GM12878 (cell line): ENCODE measurements at regions of chr6 and their contacts with region 1.

Region 1: GRCh38 chr6:82006027-82006738 is 241.4 kb downstream of the IBTK start:
- DNase-seq: no peak
- ATAC-seq: peak; percentile 95
- H3K4me3 ChIP-seq: no peak overlapping the region
- H3K27ac ChIP-seq: no peak overlapping the region
- H3K4me1 ChIP-seq: no peaks in the 10 kb centered on the region
- H3K27me3 ChIP-seq: no peaks in the 10 kb centered on the region
- CTCF ChIP-seq: peak; percentile 55 to 62 (median 60)
- EP300 ChIP-seq: no peak
- POLR2A ChIP-seq: no peak
- RAD21 ChIP-seq: peak; percentile 80

Region 2: GRCh38 chr6:80605165-80605989 is 1400.8 kb before region 1 on chr6:
- CTCF ChIA-PET with region 1: interaction called, 3 read pairs
- POLR2A ChIA-PET with region 1: no interaction called
- RAD21 ChIA-PET with region 1: no interaction called
- SMC1A ChIA-PET with region 1: interaction called, 3 read pairs
- in situ Hi-C with region 1: loop called (anchors 25 kb)
- intact Hi-C with region 1: no loop called
- DNase-seq: no peak
- ATAC-seq: peak; percentile 74
- H3K4me3 ChIP-seq: no peak overlapping the region
- H3K27ac ChIP-seq: no peak overlapping the region
- H3K4me1 ChIP-seq: no peaks in the 10 kb centered on the region
- H3K27me3 ChIP-seq: no peaks in the 10 kb centered on the region
- CTCF ChIP-seq: peak; percentile 30 to 52 (median 43); a peak in 4 of 6 replicates
- EP300 ChIP-seq: no peak
- POLR2A ChIP-seq: no peak
- RAD21 ChIP-seq: peak; percentile 51

Region 3: DNA sequence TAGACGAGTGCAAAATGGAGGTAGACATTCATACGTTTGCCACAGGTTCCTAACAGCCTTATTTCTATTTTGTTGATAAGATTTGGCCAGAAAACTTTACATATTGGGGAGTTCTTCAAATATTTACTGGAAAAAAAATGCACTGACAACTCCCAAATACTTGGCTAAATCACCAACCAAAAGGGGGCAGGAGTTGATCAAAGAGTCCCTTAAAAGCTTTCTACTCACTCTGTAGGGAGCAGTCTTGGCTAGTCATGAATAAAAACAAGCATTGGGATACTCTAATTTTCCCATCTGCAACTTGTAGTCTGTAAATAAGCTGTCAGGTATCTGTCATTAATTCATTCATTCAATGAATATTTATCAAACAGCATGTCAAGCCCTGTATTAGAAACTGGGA is 272.1 kb before region 1 on chr6:
- CTCF ChIA-PET with region 1: interaction called, 41 read pairs
- POLR2A ChIA-PET with region 1: interaction called, 3 read pairs
- RAD21 ChIA-PET with region 1: interaction called, 7 read pairs
- SMC1A ChIA-PET with region 1: interaction called, 18 read pairs
- in situ Hi-C with region 1: no loop called
- intact Hi-C with region 1: no loop called
- DNase-seq: no peak
- ATAC-seq: no peak
- H3K4me3 ChIP-seq: no peak overlapping the region
- H3K27ac ChIP-seq: no peak overlapping the region
- H3K4me1 ChIP-seq: no peaks in the 10 kb centered on the region
- H3K27me3 ChIP-seq: no peaks in the 10 kb centered on the region
- CTCF ChIP-seq: peak in 1 of 3 experiments; percentile 32; a peak in 1 of 6 replicates
- EP300 ChIP-seq: no peak
- POLR2A ChIP-seq: no peak
- RAD21 ChIP-seq: peak; percentile 36; the same call in 1 of the 2 replicates

Region 4: GRCh38 chr6:81752138-81752920 is 253.9 kb before region 1 on chr6 and contains the start of gene TENT5A:
- CTCF ChIA-PET with region 1: interaction called, 24 read pairs
- POLR2A ChIA-PET with region 1: no interaction called
- RAD21 ChIA-PET with region 1: interaction called, 27 read pairs
- SMC1A ChIA-PET with region 1: interaction called, 25 read pairs
- in situ Hi-C with region 1: no loop called
- intact Hi-C with region 1: loop called (anchors 5 kb)
- DNase-seq: no peak
- ATAC-seq: peak; percentile 93
- H3K4me3 ChIP-seq: peak within 1 kb of the TSS; percentile 61
- H3K27ac ChIP-seq: no peak within 1 kb of the TSS
- H3K4me1 ChIP-seq: no peaks in the 10 kb centered on the region
- H3K27me3 ChIP-seq: peaks cover 0 to 10% of the 10 kb centered on the region in 2 experiments
- CTCF ChIP-seq: no peak
- EP300 ChIP-seq: no peak
- POLR2A ChIP-seq: peak; percentile 58
- RAD21 ChIP-seq: no peak
- polyA plus RNA-seq, gene TENT5A: 0.40 to 0.53 TPM

Region 5: DNA sequence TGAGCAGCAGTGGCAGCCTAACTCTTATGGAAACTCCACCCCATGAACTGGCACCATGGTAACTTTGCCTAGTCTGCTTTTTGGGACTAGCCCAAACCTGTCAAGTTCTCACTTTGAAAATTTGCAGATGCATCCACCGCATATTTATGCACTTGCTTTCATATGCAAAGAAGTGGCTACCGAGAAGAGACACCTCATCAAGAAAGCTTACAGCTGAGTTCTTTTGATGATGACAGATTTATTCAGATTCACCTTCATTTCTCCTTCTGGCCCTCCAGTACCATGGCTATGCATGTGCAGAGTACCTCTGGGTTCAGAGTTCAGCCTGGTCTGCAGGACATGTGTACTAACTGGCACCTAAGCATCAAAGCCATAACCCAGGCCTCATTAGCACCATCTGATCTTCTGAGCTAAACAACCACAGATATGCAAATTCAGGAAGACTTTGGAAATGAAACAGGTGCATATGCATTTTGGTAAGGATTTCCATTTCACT is 99.4 kb before region 1 on chr6:
- CTCF ChIA-PET with region 1: interaction called, 11 read pairs
- POLR2A ChIA-PET with region 1: no interaction called
- RAD21 ChIA-PET with region 1: interaction called, 3 read pairs
- SMC1A ChIA-PET with region 1: interaction called, 15 read pairs
- in situ Hi-C with region 1: no loop called
- intact Hi-C with region 1: no loop called
- DNase-seq: peak; percentile 44
- ATAC-seq: peak; percentile 54
- H3K4me3 ChIP-seq: no peak overlapping the region
- H3K27ac ChIP-seq: no peak overlapping the region
- H3K4me1 ChIP-seq: no peaks in the 10 kb centered on the region
- H3K27me3 ChIP-seq: no peaks in the 10 kb centered on the region
- CTCF ChIP-seq: no peak
- EP300 ChIP-seq: 0 out of 4 replicates have a peak, but pooled peaks of 1 of the 2 experiments have one; percentile 5
- POLR2A ChIP-seq: no peak
- RAD21 ChIP-seq: no peak

Region 6: GRCh38 chr6:82022601-82023102 is 16.5 kb after region 1 on chr6:
- CTCF ChIA-PET with region 1: interaction called, 15 read pairs
- POLR2A ChIA-PET with region 1: no interaction called
- RAD21 ChIA-PET with region 1: no interaction called
- SMC1A ChIA-PET with region 1: no interaction called
- in situ Hi-C with region 1: no loop called
- intact Hi-C with region 1: no loop called
- DNase-seq: no peak
- ATAC-seq: no peak
- H3K4me3 ChIP-seq: no peak overlapping the region
- H3K27ac ChIP-seq: no peak overlapping the region
- H3K4me1 ChIP-seq: no peaks in the 10 kb centered on the region
- H3K27me3 ChIP-seq: no peaks in the 10 kb centered on the region; a peak in 2 of 4 replicates
- CTCF ChIP-seq: no peak
- EP300 ChIP-seq: no peak
- POLR2A ChIP-seq: no peak
- RAD21 ChIP-seq: no peak